ENCODE measurements at regions of chr11 and their contacts with region 1.

Region 1: GRCh38 chr11:12813371-12814225 is 139.4 kb downstream of the TEAD1 start:
- DNase-seq: no peak
- H3K4me3 ChIP-seq: no peak overlapping the region
- H3K27ac ChIP-seq: peak overlapping the region; percentile 59 to 63
- H3K4me1 ChIP-seq: peaks cover 2% of the 10 kb centered on the region
- H3K27me3 ChIP-seq: no peaks in the 10 kb centered on the region
- CTCF ChIP-seq: peak in 1 of 4 experiments; percentile 40
- POLR2A ChIP-seq: no peak

Region 2: DNA sequence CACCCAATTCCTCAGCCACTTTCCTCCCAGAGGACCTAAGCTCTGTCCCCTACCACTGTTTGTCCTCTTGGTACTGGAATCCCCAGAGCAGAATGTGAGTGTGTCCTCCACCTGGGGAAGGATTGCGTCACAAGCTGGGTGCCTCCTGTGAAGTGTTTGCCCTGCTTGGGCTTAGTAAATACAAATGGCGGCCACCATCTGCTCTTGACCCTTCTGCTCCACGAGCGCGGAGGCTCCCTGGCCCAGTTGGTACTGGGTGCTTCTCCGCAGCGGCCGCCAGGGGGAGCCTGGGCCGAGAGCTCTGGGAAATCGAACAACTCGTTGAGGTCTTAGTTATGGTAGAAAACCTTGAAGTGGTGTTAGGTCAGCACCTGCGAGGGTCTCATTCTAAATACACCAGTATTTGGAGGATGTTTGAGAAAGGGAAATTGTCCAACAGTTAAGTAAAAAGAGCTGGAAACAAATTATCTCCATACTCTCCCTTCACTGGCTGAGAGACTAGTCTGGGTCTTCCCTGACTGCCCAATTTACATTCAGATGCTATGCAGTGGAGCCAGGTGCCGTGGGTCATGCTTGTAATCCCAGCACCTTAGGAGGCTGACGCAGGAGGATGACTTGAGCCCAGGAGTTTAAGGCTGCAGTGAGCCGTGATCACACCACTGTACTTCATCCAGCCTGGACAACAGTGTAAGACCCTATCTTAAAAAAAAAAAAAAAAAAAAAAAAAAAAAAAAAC is 214.0 kb before region 1 on chr11:
- intact Hi-C with region 1: loop called (anchors 10 kb)
- DNase-seq: peak; percentile 7
- H3K4me3 ChIP-seq: no peak overlapping the region
- H3K27ac ChIP-seq: no peak overlapping the region
- H3K4me1 ChIP-seq: no peaks in the 10 kb centered on the region
- H3K27me3 ChIP-seq: no peaks in the 10 kb centered on the region
- CTCF ChIP-seq: peak in 3 of 4 experiments; percentile 41 to 60 (median 51)
- POLR2A ChIP-seq: no peak

Region 3: GRCh38 chr11:12735262-12735661 is 78.3 kb before region 1 on chr11:
- intact Hi-C with region 1: no loop called
- DNase-seq: no peak
- H3K4me3 ChIP-seq: no peak overlapping the region
- H3K27ac ChIP-seq: no peak overlapping the region
- H3K4me1 ChIP-seq: no peaks in the 10 kb centered on the region
- H3K27me3 ChIP-seq: no peaks in the 10 kb centered on the region
- CTCF ChIP-seq: no peak
- POLR2A ChIP-seq: no peak

Region 4: DNA sequence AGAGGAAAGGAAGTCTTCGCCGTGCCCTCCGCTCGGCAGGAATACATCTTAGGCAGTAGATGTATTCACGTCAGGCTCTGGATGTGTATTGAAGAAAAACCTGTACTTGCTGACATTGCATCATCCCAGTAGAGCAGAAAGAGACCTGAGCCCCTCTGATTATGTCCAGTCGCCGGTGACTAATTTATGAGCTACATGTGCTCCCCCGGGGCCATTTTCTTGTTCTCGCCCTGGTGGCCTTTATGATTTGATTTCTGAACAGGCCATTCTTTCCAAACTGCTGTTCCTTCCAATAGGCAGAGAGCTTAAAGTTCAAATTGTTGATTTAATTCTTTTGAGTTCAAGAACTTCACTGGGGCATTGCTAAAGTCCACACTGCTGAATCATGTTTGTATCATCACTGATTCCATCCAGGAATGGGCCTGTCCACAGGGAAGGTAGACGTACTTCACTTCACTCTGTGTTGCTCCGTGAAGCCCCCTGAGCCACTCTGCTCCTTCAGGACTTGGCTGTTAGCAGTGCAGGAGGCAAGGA is 58.3 kb after region 1 on chr11:
- intact Hi-C with region 1: loop called (anchors 5 kb)
- DNase-seq: no peak
- H3K4me3 ChIP-seq: no peak overlapping the region
- H3K27ac ChIP-seq: no peak overlapping the region
- H3K4me1 ChIP-seq: no peaks in the 10 kb centered on the region
- H3K27me3 ChIP-seq: no peaks in the 10 kb centered on the region
- CTCF ChIP-seq: no peak
- POLR2A ChIP-seq: no peak

Measured in prostate gland (tissue), 2 donors.